A549 (cell line): ENCODE measurements at regions of chr1 and their contacts with region 1.

Region 1: DNA sequence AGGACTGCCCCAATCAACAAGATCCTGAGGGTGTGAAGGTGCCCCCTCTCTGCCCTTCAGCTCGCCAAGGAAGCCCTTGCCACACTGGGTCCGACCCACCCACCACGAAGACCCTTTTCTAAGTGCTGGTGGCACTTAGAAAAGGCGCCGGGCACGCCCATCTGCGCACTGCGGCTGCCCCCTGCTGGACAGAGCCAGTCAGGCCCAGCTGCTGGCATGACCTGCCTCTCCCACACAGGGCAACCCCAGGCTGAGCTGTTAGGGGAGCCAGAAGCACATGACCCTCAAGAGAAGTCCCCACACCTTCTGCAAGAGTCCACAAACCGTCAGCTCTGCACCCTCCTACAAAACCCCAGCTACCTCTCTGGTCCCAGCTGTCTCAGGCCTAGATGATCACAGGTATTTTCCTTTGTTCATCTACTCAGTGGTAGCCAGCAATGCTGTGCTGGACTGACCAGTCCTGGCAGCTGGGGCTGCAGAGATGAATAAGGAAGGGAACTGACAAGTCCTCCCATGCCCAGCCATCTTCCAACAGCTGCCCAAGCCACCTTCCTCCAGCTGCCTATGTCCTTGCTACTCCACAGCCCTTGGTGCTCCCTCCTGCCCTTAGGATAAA is 40.0 kb upstream of the ZC3H12A start:
- DNase-seq: peak; percentile 50 to 77
- ATAC-seq: peak; percentile 77 to 95
- H3K4me3 ChIP-seq: no peak overlapping the region
- H3K27ac ChIP-seq: no peak overlapping the region; a peak in 1 of 6 replicates
- H3K4me1 ChIP-seq: no peaks in the 10 kb centered on the region
- CTCF ChIP-seq: peak; percentile 64
- EP300 ChIP-seq: no peak
- POLR2A ChIP-seq: no peak
- RAD21 ChIP-seq: peak; percentile 79 to 84

Region 2: GRCh38 chr1:36609241-36610027 is 825.0 kb before region 1 on chr1:
- CTCF ChIA-PET with region 1: interaction called, 23 read pairs
- POLR2A ChIA-PET with region 1: no interaction called
- DNase-seq: peak; percentile 63 to 75
- ATAC-seq: peak; percentile 82 to 96
- H3K4me3 ChIP-seq: no peak overlapping the region
- H3K27ac ChIP-seq: no peak overlapping the region
- H3K4me1 ChIP-seq: no peaks in the 10 kb centered on the region
- CTCF ChIP-seq: peak; percentile 47
- EP300 ChIP-seq: no peak
- POLR2A ChIP-seq: no peak
- RAD21 ChIP-seq: peak; percentile 35 to 68; a peak in 4 of 5 replicates

Region 3: DNA sequence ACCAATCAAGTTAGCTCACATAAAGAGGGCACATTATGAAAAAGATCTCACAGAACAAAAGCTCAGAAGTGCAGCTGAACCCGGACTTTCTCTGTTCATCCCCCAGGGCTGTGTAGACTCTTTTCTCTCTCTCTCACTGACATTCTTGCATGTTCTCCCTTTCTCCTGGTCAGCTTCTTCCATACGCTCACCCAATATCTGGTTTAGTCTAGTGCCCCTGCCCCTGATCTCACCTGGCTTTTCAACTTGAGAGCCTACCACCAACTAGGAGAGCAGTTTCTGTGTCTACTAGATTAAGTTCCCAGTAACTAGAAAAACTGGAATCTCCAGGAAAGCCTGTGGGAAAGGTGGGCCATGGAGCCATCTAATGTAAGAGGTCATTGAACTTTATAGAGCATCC is 273.2 kb before region 1 on chr1:
- CTCF ChIA-PET with region 1: no interaction called
- POLR2A ChIA-PET with region 1: no interaction called
- DNase-seq: no peak
- ATAC-seq: no peak
- H3K4me3 ChIP-seq: no peak overlapping the region
- H3K27ac ChIP-seq: no peak overlapping the region
- H3K4me1 ChIP-seq: no peaks in the 10 kb centered on the region
- CTCF ChIP-seq: no peak
- EP300 ChIP-seq: no peak
- POLR2A ChIP-seq: no peak
- RAD21 ChIP-seq: no peak

Region 4: GRCh38 chr1:37391211-37392011 is 43.0 kb before region 1 on chr1:
- CTCF ChIA-PET with region 1: no interaction called
- POLR2A ChIA-PET with region 1: no interaction called
- DNase-seq: peak; percentile 7 to 16
- ATAC-seq: peak; percentile 60 to 74; a peak in 4 of 6 replicates
- H3K4me3 ChIP-seq: no peak overlapping the region
- H3K27ac ChIP-seq: no peak overlapping the region
- H3K4me1 ChIP-seq: no peaks in the 10 kb centered on the region
- CTCF ChIP-seq: no peak
- EP300 ChIP-seq: no peak
- POLR2A ChIP-seq: no peak
- RAD21 ChIP-seq: peak in 1 of 2 experiments; percentile 39; a peak in 2 of 5 replicates

Region 5: DNA sequence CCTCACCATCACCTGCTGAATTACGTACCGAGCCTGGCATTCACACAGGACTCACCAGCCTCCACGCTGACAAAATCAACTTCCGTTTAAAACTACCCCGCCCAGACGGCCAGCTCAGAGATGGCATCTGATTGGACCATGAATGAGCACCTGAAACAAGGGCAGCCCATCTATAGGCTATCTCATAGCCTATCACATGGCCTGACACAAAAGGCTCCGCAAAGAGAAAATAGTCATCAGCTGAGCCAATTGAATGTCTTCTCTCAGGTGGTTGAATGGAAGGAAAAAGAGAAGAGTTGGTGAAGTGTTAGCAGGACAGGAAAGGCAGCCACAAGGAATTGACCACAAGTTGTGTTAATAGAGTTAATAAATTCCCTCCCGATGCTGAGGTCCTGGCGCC is 10.6 kb before region 1 on chr1:
- CTCF ChIA-PET with region 1: interaction called, 12 read pairs
- POLR2A ChIA-PET with region 1: no interaction called
- DNase-seq: no peak
- ATAC-seq: 0 out of 6 replicates have a peak, but pooled peaks of 1 of the 2 experiments have one; percentile 30
- H3K4me3 ChIP-seq: no peak overlapping the region
- H3K27ac ChIP-seq: no peak overlapping the region
- H3K4me1 ChIP-seq: no peaks in the 10 kb centered on the region; the same call in 2 of the 3 replicates
- CTCF ChIP-seq: no peak
- EP300 ChIP-seq: no peak
- POLR2A ChIP-seq: no peak
- RAD21 ChIP-seq: no peak

Region 6: DNA sequence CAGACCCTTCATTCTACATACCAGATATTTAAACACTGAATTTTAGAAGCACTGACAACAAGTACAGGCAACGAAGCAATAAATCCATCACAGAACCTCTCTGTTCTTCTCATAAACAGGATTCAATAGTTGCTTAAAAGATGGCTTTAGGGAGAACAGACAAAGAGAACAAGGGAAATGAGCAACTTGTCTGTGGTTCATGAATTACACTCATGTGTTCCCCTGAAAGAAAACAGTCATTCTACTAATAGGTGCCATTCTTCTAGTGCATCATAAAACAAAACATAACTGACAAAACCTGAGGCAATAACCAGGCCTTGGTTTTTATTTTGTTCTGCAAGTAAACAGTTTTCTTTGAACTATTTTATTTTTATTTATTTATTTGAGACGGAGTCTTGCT is 154.5 kb after region 1 on chr1:
- CTCF ChIA-PET with region 1: no interaction called
- POLR2A ChIA-PET with region 1: no interaction called
- DNase-seq: no peak
- ATAC-seq: no peak
- H3K4me3 ChIP-seq: no peak overlapping the region
- H3K27ac ChIP-seq: no peak overlapping the region
- H3K4me1 ChIP-seq: peaks cover 3% of the 10 kb centered on the region; the same call in 2 of the 3 replicates
- CTCF ChIP-seq: no peak
- EP300 ChIP-seq: no peak
- POLR2A ChIP-seq: no peak
- RAD21 ChIP-seq: no peak